ENCODE measurements at regions of chr17 and their contacts with region 1.

Region 1: DNA sequence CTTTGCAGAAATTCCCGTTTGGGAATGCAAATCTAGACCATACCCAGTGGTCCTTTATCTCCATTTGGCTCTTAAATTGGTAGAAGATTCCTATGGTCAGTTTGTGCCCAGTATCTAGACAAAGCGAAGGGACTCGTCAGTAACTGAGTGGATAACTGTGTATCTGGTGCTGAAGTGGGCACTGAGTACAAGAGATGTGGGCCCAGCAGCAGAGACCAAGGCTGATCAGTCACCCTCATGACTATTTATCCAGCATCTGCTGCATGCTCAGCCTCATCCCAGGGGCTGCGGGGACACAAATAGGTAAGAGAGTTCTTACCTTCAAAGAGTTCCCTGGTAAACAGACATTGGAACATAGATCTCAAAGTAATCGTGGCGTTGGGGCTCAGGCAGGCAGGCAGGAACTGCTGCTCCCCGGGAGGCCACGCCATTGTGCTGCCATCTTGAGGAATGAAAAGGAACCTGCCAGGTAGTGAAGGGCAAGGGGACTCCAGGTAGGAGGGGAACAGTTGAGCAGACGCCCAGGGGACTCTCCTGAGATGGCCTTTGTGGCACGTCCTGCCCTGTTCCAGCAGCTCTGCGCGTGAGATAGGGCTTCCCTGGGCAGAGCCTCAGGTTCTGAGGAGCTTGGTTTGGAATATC is 10.3 kb downstream of the NT5M start:
- DNase-seq: peak; percentile 44 to 85 (median 70)
- H3K4me3 ChIP-seq: no peak overlapping the region
- H3K4me3 Mint-ChIP-seq: no peak overlapping the region
- H3K27ac ChIP-seq: no peak overlapping the region
- H3K27ac Mint-ChIP-seq: peak overlapping the region in 2 of 8 donors; percentile 43 to 58
- H3K4me1 ChIP-seq: no peaks in the 10 kb centered on the region
- H3K4me1 Mint-ChIP-seq: peaks cover 5 to 6% (median 6%) of the 10 kb centered on the region in 3 donors
- H3K27me3 ChIP-seq: no peaks in the 10 kb centered on the region
- H3K27me3 Mint-ChIP-seq: no peaks in the 10 kb centered on the region

Region 2: GRCh38 chr17:17001874-17002520 is 311.5 kb before region 1 on chr17:
- CTCF ChIA-PET with region 1: interaction called, 10 read pairs
- POLR2A ChIA-PET with region 1: no interaction called
- DNase-seq: peak; percentile 63 to 78 (median 69)
- H3K4me3 ChIP-seq: no peak overlapping the region
- H3K4me3 Mint-ChIP-seq: peak overlapping the region in 1 of 7 donors; percentile 80
- H3K27ac ChIP-seq: no peak overlapping the region
- H3K27ac Mint-ChIP-seq: peak overlapping the region in 1 of 8 donors; percentile 29
- H3K4me1 ChIP-seq: no peaks in the 10 kb centered on the region
- H3K4me1 Mint-ChIP-seq: peaks cover 2 to 4% (median 3%) of the 10 kb centered on the region in 3 donors
- H3K27me3 ChIP-seq: no peaks in the 10 kb centered on the region
- H3K27me3 Mint-ChIP-seq: peaks cover 3 to 11% of the 10 kb centered on the region in 2 donors

Region 3: DNA sequence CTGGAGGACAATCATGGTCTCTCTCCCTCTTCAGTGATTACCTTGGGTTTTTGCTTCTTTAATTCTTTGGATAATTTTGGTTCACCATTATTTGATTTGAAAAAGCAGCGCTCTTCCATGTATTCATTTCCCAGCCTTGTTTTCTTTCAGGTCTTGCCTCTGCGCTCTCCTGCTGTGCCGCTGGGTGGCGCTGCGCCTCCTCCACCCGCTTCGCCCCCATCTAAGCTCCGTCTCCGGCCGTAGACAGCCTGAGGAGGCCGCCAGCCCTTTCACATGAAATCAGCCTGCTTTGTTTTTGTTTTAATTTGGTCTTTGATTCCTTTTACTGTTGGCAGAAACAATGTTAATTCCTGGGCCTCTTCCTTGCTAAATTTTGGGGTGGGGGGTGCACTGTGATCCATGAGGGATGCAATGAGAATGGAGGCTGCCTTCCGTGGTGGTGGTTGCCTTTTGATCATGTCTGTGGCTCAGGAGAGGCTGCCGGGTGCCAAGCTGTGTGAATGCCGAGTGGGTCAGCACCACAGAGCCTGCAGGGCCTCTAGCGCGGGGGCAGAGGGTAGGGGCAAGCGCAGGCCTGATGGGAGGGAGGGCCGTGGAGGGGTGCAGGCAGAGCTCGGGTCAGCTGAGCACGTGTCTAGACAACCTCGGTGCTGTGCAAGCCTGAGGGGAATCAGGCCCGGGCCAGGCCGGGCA is 171.5 kb before region 1 on chr17:
- CTCF ChIA-PET with region 1: interaction called, 10 read pairs
- POLR2A ChIA-PET with region 1: no interaction called
- DNase-seq: peak in 4 of 5 donors; percentile 25 to 57 (median 35)
- H3K4me3 ChIP-seq: no peak overlapping the region
- H3K4me3 Mint-ChIP-seq: peak overlapping the region in 2 of 7 donors; percentile 64 to 74
- H3K27ac ChIP-seq: no peak overlapping the region
- H3K27ac Mint-ChIP-seq: peak overlapping the region in 7 of 8 donors; percentile 13 to 83 (median 74)
- H3K4me1 ChIP-seq: no peaks in the 10 kb centered on the region
- H3K4me1 Mint-ChIP-seq: peaks cover 10 to 16% (median 14%) of the 10 kb centered on the region in 3 donors
- H3K27me3 ChIP-seq: no peaks in the 10 kb centered on the region
- H3K27me3 Mint-ChIP-seq: no peaks in the 10 kb centered on the region

Region 4: DNA sequence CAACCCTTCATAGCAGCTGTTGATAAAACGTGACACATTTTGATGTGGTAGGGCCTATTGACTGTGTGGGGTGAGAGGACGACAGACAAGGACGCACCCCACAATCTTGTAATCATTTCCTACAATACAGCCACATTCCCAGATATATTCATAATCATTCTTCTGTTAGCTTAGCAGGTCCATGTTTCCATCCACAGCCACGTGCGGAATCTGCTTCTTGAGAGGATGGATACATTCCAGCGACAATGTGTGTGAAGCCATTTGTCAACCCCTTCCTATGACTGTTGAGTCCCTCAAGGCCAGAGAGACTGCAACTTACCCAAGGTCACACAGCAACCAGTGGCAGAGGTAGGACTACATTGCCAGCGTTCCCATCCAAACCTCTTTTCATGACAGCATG is 23.8 kb before region 1 on chr17:
- CTCF ChIA-PET with region 1: no interaction called
- POLR2A ChIA-PET with region 1: no interaction called
- DNase-seq: no peak
- H3K4me3 ChIP-seq: no peak overlapping the region
- H3K4me3 Mint-ChIP-seq: no peak overlapping the region
- H3K27ac ChIP-seq: no peak overlapping the region
- H3K27ac Mint-ChIP-seq: no peak overlapping the region
- H3K4me1 ChIP-seq: no peaks in the 10 kb centered on the region
- H3K4me1 Mint-ChIP-seq: no peaks in the 10 kb centered on the region
- H3K27me3 ChIP-seq: no peaks in the 10 kb centered on the region
- H3K27me3 Mint-ChIP-seq: peaks cover 0 to 3% of the 10 kb centered on the region in 2 donors

Measured in CD8-positive, alpha-beta memory T cell (primary cell).